CD8-positive, alpha-beta T cell (primary cell): ENCODE measurements at regions of chr3 and their contacts with region 1.

Region 1: DNA sequence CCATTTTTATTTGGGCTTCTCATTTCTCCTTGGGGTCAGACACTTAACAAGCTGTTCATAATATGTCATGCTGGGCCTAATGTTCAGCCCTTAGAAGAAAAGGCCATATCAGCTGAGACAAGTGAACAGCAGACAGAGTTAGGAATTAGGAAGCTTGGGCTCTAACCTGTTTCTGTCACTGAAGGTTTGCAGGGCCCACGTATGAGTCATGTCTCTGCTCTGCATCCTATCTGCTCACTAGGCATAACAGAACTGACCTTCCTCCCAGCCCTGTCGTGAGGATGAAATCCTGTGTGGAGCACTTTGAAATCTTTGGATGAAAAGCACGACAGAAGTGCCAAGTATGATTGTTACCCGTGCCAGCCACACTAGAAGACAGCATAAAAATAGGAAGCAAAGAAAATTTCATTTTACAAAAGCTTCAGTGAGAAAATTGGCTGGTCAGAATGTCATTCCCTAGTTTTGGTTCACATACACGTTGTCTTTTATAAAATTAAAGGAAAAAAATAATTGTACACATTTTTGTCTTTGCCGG is 26.5 kb upstream of the CD47 start:
- DNase-seq: no peak
- ATAC-seq: no peak
- H3K4me3 ChIP-seq: no peak overlapping the region
- H3K4me3 Mint-ChIP-seq: no peak overlapping the region
- H3K27ac ChIP-seq: no peak overlapping the region
- H3K27ac Mint-ChIP-seq: no peak overlapping the region
- H3K4me1 ChIP-seq: no peaks in the 10 kb centered on the region
- H3K4me1 Mint-ChIP-seq: peaks cover 7% of the 10 kb centered on the region
- H3K27me3 ChIP-seq: no peaks in the 10 kb centered on the region
- H3K27me3 Mint-ChIP-seq: no peaks in the 10 kb centered on the region
- CTCF ChIP-seq: no peak

Region 2: DNA sequence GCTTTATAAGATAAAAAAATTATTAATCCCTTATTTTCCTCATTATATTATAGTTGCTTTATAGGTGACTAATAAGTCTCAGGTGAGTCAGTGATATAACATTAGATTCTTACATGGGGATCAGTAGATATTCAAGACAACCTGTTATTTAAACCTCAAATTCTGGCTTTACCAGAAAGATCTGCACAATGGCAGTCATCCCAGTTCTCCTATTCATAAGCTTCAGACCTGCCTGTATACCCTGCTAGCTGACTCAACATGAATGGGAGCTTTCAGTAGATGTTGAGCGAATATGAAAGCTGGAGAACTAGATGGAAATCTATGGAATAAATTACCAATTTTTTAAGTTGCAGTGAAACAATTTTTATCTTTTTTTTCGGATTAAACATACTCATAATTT is 760.6 kb before region 1 on chr3:
- CTCF ChIA-PET with region 1: no interaction called
- POLR2A ChIA-PET with region 1: no interaction called
- intact Hi-C with region 1: no loop called
- DNase-seq: no peak
- ATAC-seq: no peak
- H3K4me3 ChIP-seq: no peak overlapping the region
- H3K4me3 Mint-ChIP-seq: no peak overlapping the region
- H3K27ac ChIP-seq: no peak overlapping the region
- H3K27ac Mint-ChIP-seq: no peak overlapping the region
- H3K4me1 ChIP-seq: no peaks in the 10 kb centered on the region
- H3K4me1 Mint-ChIP-seq: no peaks in the 10 kb centered on the region
- H3K27me3 ChIP-seq: no peaks in the 10 kb centered on the region
- H3K27me3 Mint-ChIP-seq: peaks cover 7% of the 10 kb centered on the region
- CTCF ChIP-seq: no peak

Region 3: GRCh38 chr3:108100906-108101660 is 16.2 kb before region 1 on chr3:
- CTCF ChIA-PET with region 1: interaction called, 4 read pairs
- POLR2A ChIA-PET with region 1: no interaction called
- intact Hi-C with region 1: loop called (anchors 2 kb)
- DNase-seq: peak in 4 of 9 experiments; percentile 33 to 73 (median 52)
- ATAC-seq: peak; percentile 74
- H3K4me3 ChIP-seq: no peak overlapping the region
- H3K4me3 Mint-ChIP-seq: peak overlapping the region; percentile 4
- H3K27ac ChIP-seq: no peak overlapping the region
- H3K27ac Mint-ChIP-seq: peak overlapping the region; percentile 86
- H3K4me1 ChIP-seq: peaks cover 36% of the 10 kb centered on the region
- H3K4me1 Mint-ChIP-seq: peaks cover 60% of the 10 kb centered on the region
- H3K27me3 ChIP-seq: no peaks in the 10 kb centered on the region
- H3K27me3 Mint-ChIP-seq: no peaks in the 10 kb centered on the region
- CTCF ChIP-seq: no peak